Cardiac septum (tissue), 1 donor: ENCODE measurements at regions of chr2 and their contacts with region 1.

Region 1: DNA sequence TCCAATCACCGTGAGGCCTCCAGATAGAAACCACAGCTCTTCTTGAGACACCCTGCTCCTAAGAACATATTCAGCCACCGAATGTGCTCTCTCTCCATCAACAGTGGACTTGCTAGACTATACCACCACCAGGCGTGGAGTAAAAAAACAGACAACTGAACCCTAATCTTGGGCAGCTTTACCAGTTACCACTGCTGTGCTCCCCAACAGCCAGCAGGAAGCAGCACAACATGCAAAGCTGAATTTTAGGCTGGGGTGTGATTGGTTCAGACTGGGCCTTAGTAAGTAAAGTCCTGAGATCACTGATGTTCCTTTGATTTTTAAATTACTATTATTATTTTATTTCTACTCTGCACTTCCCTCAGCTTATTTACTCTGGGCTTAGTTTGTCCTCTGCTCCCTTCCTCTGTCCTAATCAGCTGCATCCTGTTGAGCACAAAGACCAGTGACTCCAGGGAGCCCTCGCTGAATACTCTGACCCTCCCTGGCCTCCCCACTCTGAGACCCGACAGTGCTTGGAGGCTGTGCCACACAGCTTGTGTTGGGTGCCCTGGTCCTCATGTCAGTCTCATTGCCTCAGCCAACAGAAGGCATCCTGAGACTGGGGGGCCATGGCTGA is 21.9 kb downstream of the MRPL35 start:
- DNase-seq: no peak

Region 2: DNA sequence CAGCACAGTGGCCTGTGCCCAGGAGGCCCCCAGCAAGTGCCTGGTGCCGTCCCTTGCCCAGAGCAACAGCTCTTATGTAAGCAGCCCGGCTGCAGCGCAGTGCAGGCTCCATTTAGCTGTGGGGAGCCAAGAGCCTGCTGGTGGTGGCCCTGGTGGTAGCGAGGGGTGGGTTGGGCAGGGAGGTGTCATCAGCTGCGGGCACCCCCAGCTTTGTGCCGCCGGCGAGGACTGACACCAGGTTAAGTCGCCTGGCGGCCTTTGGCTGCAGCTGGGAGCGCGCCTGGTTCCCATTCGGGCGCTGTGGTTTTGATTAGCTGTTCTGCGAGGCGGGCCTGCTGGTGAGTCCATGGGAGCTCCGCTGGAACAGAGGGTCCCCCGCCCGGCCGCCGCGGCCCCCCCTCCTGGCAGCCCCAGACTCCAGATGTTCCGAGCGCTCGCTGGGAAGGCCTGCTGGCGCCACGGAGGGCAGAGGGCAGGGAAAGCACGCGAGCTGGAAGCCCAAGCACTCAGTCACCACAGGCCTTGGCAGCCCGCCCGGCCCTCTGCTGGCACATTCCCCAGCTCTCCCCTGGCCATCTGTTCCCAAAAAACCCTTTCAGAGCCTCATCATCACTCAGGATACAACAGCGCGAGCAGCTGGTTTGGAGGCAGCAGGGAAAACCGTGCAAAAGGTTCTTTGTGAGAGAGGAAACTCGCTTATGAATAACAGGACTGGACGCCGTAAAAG is 449.0 kb before region 1 on chr2:
- intact Hi-C with region 1: no loop called
- DNase-seq: peak; percentile 97

Region 3: DNA sequence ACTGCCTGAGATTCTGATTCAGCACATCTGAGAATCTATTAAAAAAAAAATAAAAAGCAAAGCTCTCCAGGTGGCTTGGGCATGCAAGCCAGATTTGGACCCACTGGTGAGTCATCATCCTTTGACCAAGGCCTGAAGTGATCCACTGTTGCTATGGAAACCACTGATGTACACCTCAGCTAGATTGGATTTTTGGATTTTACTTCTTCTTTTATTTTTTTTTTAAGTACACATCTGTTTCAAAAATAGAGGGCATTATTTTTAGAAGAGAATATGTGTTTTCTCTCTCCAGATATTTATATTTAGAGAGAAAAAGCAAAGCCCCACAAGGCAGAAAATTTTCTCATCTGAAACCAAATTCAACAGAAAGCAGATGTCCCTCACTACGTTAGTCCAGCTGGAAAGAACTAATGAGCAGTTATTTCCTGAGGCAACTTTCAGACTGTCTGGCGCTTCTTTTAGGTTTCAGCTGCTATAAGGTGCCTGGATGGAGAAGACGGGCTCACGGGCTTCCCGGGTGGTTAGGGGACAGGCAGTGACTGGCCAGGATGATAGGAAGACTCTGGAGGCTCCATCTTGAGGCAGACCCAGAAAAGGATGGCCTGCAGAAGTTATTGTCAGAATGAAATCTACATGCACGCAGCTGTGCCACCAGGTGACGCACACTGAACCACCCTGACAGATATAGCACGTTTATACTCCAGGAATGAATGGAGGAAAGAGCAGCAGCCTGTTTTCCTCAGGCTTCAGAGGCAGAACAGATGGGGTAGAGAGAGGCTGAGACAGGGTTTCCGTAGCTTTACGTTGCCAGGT is 28.6 kb after region 1 on chr2:
- intact Hi-C with region 1: no loop called
- DNase-seq: no peak

Region 4: GRCh38 chr2:86280191-86280667 is 59.1 kb after region 1 on chr2:
- intact Hi-C with region 1: no loop called
- DNase-seq: no peak

Region 5: DNA sequence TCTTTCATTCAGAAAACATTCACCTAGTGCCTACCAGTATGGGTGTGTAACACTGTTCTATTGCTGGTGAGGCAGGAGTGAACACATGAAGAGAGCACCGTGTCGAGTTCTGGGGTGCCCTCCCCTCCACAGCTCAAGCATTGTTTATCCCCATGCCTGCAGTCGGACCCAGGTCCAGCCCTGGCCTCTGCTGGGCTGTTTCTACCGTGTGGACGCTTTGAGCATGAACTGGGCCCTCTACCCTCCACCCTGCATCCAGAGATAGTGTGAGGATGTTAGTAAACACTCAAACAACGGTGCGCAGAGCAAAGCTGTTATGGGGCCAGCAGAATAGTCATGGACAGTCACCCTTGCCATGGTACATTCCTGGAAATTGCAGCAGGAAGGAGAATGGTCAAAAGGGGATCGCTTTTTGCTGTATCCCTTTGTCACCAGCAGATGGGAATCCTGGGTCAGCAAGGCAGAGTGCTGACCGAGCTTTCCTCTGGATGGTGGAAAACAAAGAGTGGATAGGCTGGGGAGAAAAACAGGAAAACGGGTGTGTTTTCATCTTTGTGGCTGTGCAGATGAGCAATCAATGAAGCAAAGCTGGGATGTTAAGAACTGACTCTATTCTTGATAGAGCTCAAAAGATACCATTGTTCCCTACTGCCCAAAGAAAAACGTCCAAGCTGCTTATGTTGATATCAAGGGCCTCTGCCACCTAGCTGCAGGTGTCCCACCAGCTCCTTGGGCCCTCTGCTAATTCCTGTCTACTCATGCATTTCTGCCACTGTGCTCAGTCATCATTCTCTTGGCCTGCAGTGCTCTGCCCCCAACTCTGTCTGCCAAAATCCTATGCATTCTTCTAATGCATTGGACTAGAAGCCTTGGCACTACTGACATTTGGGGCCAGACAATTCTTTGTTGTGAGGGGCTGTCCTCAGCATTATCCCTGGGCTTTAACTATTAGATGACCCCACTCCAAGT is 77.5 kb after region 1 on chr2:
- intact Hi-C with region 1: loop called (anchors 1 kb)
- DNase-seq: peak; percentile 59

Region 6: DNA sequence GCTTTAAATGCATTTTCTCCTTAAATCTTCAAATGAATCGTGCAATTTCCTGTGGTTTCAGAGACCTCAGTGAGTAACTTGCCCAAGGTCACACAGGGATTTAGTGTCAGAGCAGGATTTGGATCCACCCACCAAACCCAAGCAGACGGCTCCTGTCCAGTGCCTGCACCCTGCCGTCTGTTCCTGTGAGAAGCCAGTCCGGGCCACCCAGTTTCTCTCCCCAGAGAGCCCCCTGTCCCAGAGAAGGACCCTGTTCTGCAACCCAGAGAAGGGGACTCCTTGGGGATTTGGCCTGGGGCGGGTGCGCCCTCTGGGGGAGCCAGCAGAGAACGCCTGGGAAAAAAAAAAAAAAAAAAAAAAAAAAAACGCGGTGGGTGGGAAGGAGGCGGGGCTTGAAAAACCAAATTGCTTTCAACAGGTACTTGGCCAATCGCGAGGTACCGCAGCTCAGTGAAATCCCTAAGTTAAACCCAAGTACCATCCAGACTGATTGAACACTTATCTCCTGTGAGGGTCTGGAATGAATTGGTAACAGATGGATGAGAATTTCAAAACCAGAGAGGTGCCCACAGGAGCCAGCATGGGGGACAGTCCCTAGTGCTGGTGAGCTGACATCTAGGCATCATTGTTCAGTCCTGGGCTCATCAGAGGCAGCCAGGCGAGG is 147.1 kb after region 1 on chr2:
- intact Hi-C with region 1: loop called (anchors 1 kb)
- DNase-seq: no peak